RWPE1 (cell line): ENCODE measurements at regions of chr17 and their contacts with region 1.

Region 1: DNA sequence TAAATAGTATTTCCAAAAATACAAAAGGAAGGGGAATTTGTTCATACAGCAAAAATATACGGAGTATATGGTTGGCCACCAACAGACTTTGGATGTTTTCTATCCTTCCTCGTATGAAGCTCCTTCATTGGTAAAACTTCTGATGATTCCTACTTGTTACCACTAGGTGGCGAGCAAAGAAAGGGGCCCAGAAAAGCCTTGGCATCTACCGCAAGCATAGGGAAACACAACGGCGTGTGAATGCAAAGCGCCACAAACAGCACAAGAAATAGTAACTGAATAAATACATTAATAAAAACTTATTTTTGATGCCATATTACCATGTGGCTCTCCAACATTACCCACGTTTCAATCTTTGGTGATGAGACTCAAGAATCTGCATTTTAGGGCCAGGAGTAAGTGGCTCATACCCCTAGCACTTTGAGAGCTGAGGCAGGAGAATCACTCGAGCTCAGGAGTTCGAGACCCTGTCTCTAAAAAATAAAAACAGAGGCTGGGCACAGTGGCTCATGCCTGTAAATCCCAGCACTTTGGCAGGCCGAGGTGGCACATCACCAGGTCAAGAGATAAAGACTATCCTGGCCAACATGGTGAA is 34.5 kb downstream of the YWHAE start:
- DNase-seq: peak; percentile 59
- H3K27ac ChIP-seq: peak overlapping the region; percentile 77
- CTCF ChIP-seq: peak; percentile 90

Region 2: DNA sequence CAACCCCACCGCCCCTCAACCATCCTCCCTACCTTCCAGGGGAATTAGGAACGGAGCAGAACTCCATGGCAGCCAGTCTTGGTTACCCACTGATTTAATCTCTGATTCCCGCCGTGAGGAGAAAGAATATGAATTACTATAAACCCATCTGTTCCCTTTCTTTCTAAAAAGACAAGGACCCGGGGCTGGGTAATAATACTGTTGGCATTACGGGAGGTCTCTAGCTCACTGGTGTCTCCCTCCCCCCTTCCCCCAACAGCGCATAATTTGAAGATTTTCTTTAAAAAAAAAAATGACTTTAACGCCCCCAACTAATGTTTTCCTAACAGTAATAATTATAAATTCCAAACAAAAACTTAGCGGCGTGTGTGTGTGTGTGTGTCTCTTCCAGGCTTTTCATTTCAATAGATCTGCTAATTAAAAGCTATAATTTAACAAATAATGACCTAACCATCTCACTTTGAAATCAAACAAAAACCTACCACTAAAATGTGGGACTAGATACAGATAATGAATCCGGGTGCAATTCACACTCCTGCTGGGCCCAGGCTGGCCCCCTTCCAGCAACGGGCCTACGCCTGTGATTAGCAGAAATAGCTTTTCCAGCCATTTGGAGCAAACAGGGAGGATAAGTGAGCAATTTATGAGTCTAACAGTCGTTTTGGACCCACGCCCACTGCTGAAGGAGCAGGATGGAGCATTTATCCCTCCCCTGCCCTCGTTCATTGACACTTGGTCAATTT is 113.5 kb before region 1 on chr17:
- CTCF ChIA-PET with region 1: no interaction called
- POLR2A ChIA-PET with region 1: no interaction called
- DNase-seq: no peak
- H3K27ac ChIP-seq: peak overlapping the region; percentile 22; the same call in 1 of the 2 replicates
- CTCF ChIP-seq: no peak

Region 3: GRCh38 chr17:1379930-1380313 is 14.4 kb after region 1 on chr17:
- CTCF ChIA-PET with region 1: interaction called, 12 read pairs
- POLR2A ChIA-PET with region 1: no interaction called
- DNase-seq: no peak
- H3K27ac ChIP-seq: 0 out of 2 replicates have a peak overlapping the region, but pooled peaks have one; percentile 9
- CTCF ChIP-seq: no peak

Region 4: GRCh38 chr17:1516388-1517161 is 151.0 kb after region 1 on chr17 and contains the start of gene INPP5K:
- CTCF ChIA-PET with region 1: interaction called, 16 read pairs
- POLR2A ChIA-PET with region 1: no interaction called
- DNase-seq: peak; percentile 98
- H3K27ac ChIP-seq: peak within 1 kb of the TSS; percentile 93
- CTCF ChIP-seq: no peak